ENCODE measurements at regions of chr12 and their contacts with region 1.

Region 1: GRCh38 chr12:59403259-59403932 is 192.4 kb upstream of the SLC16A7 start:
- DNase-seq: peak; percentile 52
- ATAC-seq: no peak
- H3K4me3 Mint-ChIP-seq: no peak overlapping the region
- H3K27ac Mint-ChIP-seq: no peak overlapping the region
- H3K4me1 Mint-ChIP-seq: peaks cover 16% of the 10 kb centered on the region
- H3K27me3 Mint-ChIP-seq: peaks cover 5% of the 10 kb centered on the region
- CTCF ChIP-seq: peak; percentile 80

Region 2: GRCh38 chr12:59595883-59596540 is 192.6 kb after region 1 on chr12 and contains the start of gene SLC16A7:
- CTCF ChIA-PET with region 1: interaction called, 3 read pairs
- POLR2A ChIA-PET with region 1: no interaction called
- intact Hi-C with region 1: loop called (anchors 10 kb)
- DNase-seq: peak; percentile 87
- ATAC-seq: peak; percentile 50
- H3K4me3 Mint-ChIP-seq: peak within 1 kb of the TSS; percentile 85
- H3K27ac Mint-ChIP-seq: peak within 1 kb of the TSS; percentile 98
- H3K4me1 Mint-ChIP-seq: peaks cover 51% of the 10 kb centered on the region
- H3K27me3 Mint-ChIP-seq: no peaks in the 10 kb centered on the region
- CTCF ChIP-seq: no peak
- total RNA-seq, gene SLC16A7: 21.0 to 21.4 TPM

Region 3: DNA sequence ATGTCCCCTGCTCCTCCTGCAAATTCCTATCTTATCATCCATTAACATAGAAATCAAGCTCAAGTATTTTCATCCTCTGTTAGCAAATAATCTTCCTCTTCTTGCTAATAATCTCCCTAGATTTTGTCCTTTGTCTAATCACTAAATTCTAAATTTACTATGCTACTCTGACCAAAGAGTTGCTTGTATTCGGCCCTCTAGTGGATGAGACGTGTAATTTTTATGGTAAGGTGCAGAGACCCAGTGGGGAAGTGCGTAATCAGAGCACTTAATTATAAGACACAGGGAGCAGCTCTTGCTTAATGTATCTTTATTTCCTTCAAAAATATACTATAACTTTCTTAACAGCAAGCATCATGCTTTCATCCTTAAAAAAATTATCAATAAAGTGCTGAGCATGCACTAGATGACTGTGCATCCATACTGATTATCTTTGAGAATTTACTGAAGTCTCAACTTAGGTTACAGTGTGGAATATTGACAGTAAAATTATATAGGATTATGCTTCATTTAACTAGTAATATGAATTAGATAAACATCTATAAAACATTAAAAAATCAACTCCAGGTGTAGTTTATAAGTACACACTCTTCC is 405.0 kb after region 1 on chr12:
- CTCF ChIA-PET with region 1: interaction called, 11 read pairs
- POLR2A ChIA-PET with region 1: no interaction called
- intact Hi-C with region 1: no loop called
- DNase-seq: peak; percentile 12
- ATAC-seq: peak; percentile 75
- H3K4me3 Mint-ChIP-seq: no peak overlapping the region
- H3K27ac Mint-ChIP-seq: no peak overlapping the region
- H3K4me1 Mint-ChIP-seq: no peaks in the 10 kb centered on the region
- H3K27me3 Mint-ChIP-seq: no peaks in the 10 kb centered on the region
- CTCF ChIP-seq: peak; percentile 76

Region 4: DNA sequence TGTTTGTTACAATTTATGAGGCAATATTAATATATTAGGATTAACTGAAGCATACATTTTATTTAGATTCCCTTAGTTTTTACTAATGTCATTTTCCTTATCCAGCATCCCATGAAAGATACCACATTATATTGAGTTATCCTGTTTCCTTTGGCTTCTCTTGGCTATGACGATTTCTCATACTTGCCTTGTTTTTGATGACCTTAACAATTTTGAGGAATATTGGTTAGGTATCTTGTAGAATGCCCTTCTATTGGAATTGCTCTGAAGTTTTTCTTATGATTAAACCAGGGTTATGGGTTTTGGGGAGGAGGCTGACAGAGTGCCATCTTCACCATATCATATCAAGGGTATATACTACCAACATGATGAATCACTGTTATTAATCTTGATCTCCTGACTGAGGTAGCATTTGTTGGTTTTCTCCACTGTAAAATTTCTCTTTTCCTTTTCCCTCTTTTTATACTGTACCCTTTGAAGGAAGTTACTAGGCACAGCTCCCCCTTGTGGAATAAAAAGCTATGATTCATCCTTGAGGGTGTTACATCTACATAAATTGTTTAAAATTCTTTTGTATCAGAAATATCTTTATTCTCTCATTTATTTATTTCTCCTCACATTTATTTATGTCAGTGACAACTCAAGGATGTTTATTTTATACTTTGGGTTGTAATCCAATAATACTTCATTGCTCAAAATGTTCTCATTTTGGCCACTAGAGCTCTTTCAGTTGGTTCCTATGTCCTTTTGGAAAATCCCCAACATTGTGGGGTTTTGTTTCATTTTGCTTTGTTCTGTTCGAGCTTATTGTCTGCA is 431.5 kb after region 1 on chr12:
- CTCF ChIA-PET with region 1: interaction called, 16 read pairs
- POLR2A ChIA-PET with region 1: no interaction called
- intact Hi-C with region 1: loop called (anchors 5 kb)
- DNase-seq: peak; percentile 7
- ATAC-seq: no peak
- H3K4me3 Mint-ChIP-seq: no peak overlapping the region
- H3K27ac Mint-ChIP-seq: no peak overlapping the region
- H3K4me1 Mint-ChIP-seq: no peaks in the 10 kb centered on the region
- H3K27me3 Mint-ChIP-seq: peaks cover 8% of the 10 kb centered on the region
- CTCF ChIP-seq: peak; percentile 81

Measured in activated CD8-positive, alpha-beta T cell treated with anti-CD3 and anti-CD28 coated beads for 36 hours (primary cell).